ENCODE measurements at regions of chr3 and their contacts with region 1.

Region 1: GRCh38 chr3:185572183-185572582 is 13.9 kb upstream of the SENP2 start:
- DNase-seq: no peak
- ATAC-seq: no peak
- H3K4me3 Mint-ChIP-seq: no peak overlapping the region
- H3K27ac Mint-ChIP-seq: no peak overlapping the region
- H3K4me1 Mint-ChIP-seq: peaks cover 5% of the 10 kb centered on the region
- H3K27me3 Mint-ChIP-seq: no peaks in the 10 kb centered on the region
- CTCF ChIP-seq: no peak

Region 2: DNA sequence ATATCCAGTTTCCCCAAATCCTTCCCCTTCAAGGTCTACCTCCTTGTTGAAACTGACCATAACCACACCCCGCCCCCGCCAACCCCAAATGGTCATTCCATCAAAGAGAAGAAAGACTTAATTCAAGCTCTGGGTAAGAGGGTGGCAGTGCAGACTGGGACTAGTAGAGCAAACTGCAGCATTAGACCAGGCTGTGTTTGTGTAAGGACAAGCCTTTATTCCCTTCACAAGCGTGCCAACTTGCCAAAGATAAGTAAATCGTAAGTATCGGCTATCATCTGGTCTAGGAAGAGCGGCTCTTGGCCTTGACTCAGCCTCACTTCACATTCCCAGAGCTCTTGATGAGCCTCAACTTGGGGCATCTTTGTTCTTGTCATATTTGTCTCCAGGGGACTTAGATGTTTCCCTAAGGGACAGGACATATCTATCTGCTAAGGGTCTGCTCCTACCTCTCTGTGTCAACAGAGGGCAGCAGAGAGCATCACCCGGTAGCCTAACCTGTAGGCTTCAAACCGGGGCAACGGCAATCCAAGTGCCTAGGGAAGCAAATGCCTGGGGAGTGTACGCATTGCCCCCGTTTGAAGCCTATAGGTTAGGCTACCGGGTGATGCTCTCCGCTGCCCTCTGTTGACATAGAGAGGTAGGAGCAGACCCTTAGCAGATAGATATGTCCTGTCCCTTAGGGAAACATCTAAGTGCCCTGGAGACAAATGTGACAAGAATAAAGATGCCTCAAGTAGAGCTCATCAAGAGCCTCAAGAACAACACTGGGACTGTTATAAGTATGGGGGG is 218.2 kb before region 1 on chr3:
- CTCF ChIA-PET with region 1: interaction called, 3 read pairs
- POLR2A ChIA-PET with region 1: no interaction called
- intact Hi-C with region 1: loop called (anchors 10 kb)
- DNase-seq: peak; percentile 89
- ATAC-seq: peak; percentile 100
- H3K4me3 Mint-ChIP-seq: no peak overlapping the region
- H3K27ac Mint-ChIP-seq: no peak overlapping the region
- H3K4me1 Mint-ChIP-seq: no peaks in the 10 kb centered on the region
- H3K27me3 Mint-ChIP-seq: peaks cover 28% of the 10 kb centered on the region
- CTCF ChIP-seq: peak; percentile 56

Region 3: DNA sequence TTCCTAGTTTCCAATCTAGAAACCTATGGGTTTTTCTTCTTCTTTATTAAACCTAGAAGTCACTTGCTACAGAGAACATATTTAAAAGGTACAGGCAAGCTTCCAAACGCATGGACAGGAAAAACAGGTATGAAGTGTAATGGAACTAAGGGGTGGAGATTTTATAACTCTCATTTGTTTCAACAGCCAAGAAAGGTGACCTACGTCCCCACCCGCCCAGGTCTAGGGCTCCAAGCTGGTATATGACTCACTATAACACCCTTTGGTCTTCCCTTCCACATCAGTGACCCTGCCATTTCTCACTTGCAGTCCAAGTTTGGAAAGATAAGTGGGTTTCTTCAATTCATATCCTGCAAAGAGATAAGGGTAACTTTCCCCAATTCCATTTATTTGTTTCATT is 13.8 kb before region 1 on chr3:
- CTCF ChIA-PET with region 1: interaction called, 26 read pairs
- POLR2A ChIA-PET with region 1: no interaction called
- intact Hi-C with region 1: no loop called
- DNase-seq: no peak
- ATAC-seq: no peak
- H3K4me3 Mint-ChIP-seq: no peak overlapping the region
- H3K27ac Mint-ChIP-seq: no peak overlapping the region
- H3K4me1 Mint-ChIP-seq: peaks cover 21% of the 10 kb centered on the region
- H3K27me3 Mint-ChIP-seq: peaks cover 3% of the 10 kb centered on the region
- CTCF ChIP-seq: no peak

Region 4: GRCh38 chr3:185606196-185606595 is 34.0 kb after region 1 on chr3:
- CTCF ChIA-PET with region 1: no interaction called
- POLR2A ChIA-PET with region 1: no interaction called
- intact Hi-C with region 1: no loop called
- DNase-seq: no peak
- ATAC-seq: no peak
- H3K4me3 Mint-ChIP-seq: no peak overlapping the region
- H3K27ac Mint-ChIP-seq: no peak overlapping the region
- H3K4me1 Mint-ChIP-seq: peaks cover 3% of the 10 kb centered on the region
- H3K27me3 Mint-ChIP-seq: no peaks in the 10 kb centered on the region
- CTCF ChIP-seq: no peak